Gastrocnemius medialis (tissue), 4 donors: ENCODE measurements at regions of chr1 and their contacts with region 1.

Region 1: GRCh38 chr1:182446033-182446669 is 3.8 kb upstream of the RGSL1 start:
- DNase-seq: no peak
- ATAC-seq: peak in 1 of 2 donors; percentile 55
- H3K4me3 ChIP-seq: no peak overlapping the region
- H3K27ac ChIP-seq: no peak overlapping the region
- H3K4me1 ChIP-seq: no peaks in the 10 kb centered on the region
- H3K27me3 ChIP-seq: no peaks in the 10 kb centered on the region
- CTCF ChIP-seq: peak in 4 of 5 experiments; percentile 25 to 63 (median 56)
- POLR2A ChIP-seq: no peak

Region 2: GRCh38 chr1:181754103-181754502 is 692.0 kb before region 1 on chr1:
- in situ Hi-C with region 1: no loop called
- intact Hi-C with region 1: no loop called
- DNase-seq: no peak
- ATAC-seq: no peak
- H3K4me3 ChIP-seq: no peak overlapping the region
- H3K27ac ChIP-seq: no peak overlapping the region
- H3K4me1 ChIP-seq: no peaks in the 10 kb centered on the region
- H3K27me3 ChIP-seq: no peaks in the 10 kb centered on the region
- CTCF ChIP-seq: no peak
- POLR2A ChIP-seq: no peak

Region 3: GRCh38 chr1:182527680-182528079 is 81.5 kb after region 1 on chr1:
- in situ Hi-C with region 1: no loop called
- intact Hi-C with region 1: no loop called
- DNase-seq: no peak
- ATAC-seq: no peak
- H3K4me3 ChIP-seq: no peak overlapping the region
- H3K27ac ChIP-seq: no peak overlapping the region
- H3K4me1 ChIP-seq: no peaks in the 10 kb centered on the region
- H3K27me3 ChIP-seq: peaks cover 0 to 3% (median 0%) of the 10 kb centered on the region in 3 donors
- CTCF ChIP-seq: no peak
- POLR2A ChIP-seq: no peak

Region 4: DNA sequence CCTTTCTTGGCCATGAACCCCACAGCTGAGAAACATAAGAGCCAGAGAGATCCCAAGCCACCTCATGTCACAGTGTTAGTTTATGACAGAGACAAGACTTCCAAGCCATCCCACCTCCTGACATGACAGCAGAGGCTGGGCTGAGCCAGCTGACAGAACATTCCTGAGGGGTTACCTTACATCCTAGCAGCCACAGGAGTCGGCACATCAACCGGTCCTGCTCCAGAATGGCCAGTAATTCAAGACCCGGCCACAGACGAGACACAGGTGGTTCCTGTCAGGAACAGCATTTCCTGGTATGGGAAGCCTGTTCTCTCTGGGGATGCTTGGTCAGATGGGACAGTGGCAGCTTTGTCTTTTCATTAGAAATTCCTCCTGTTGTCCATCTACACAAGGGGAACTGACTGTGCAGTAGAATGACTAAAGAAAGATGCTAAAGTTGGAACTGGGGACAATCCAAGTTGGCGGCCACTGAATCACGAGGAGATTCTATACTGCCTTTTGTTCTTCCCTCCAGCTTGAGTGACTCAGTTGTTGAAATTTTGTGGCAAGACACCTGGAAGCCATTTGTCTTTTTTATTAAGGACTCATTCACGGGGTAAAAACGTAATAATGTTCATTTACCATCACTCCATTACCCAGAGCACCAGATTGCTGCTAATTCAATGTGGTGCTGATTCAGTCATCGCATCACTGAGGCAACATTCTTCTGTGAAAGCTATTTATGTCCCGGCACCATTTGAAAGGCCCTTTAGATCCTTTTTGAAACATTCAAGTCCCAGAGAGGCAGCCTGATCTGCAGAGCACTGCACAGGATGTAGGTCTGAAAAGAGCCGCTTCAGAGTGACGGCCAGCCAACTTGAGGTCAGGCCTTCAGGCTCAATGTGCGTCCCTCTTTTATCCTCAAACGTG is 306.2 kb after region 1 on chr1:
- in situ Hi-C with region 1: loop called in 2 of 4 experiments (anchors 25 kb)
- intact Hi-C with region 1: no loop called
- DNase-seq: peak in 1 of 2 donors; percentile 18
- ATAC-seq: peak; percentile 75 to 78
- H3K4me3 ChIP-seq: no peak overlapping the region
- H3K27ac ChIP-seq: peak overlapping the region in 3 of 4 donors; percentile 28 to 53 (median 36)
- H3K4me1 ChIP-seq: peaks cover 11 to 16% of the 10 kb centered on the region in 2 donors
- H3K27me3 ChIP-seq: no peaks in the 10 kb centered on the region
- CTCF ChIP-seq: no peak
- POLR2A ChIP-seq: no peak